ENCODE measurements at regions of chr1 and their contacts with region 1.

Region 1: DNA sequence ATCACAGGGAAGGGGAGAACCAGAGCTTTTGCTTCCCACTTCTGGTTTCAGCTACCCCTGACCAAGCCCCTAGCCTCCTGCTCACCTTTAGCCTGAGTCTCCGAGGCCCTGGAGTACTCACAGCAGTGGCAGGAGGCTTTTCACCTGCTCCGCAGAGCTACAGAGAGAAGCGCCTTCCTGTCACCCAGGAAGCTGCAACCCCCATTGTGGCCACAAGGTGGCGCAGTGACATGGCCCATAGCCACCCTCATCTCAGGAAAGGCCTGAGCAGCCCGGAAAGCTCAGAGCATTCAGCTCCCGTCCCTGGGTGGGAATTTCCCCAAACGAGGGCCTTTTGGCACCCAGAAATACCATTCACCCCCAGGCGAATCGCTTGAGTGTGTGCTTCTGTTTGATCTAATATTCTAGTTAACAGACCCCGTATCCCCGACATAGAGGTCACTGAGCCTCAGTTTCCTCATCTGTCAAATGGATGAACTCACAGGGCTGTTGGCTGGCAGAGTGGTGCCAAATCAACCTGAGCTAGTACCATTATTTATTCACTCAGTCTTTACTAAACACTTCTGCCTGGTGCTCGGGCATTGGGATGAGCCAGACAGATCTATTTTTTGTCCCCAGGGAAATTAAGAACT is 25.3 kb downstream of the A3GALT2 start:
- DNase-seq: peak; percentile 76
- ATAC-seq: peak; percentile 89
- H3K4me3 Mint-ChIP-seq: no peak overlapping the region
- H3K27ac Mint-ChIP-seq: no peak overlapping the region
- H3K4me1 Mint-ChIP-seq: no peaks in the 10 kb centered on the region
- H3K27me3 Mint-ChIP-seq: no peaks in the 10 kb centered on the region
- CTCF ChIP-seq: peak; percentile 69

Region 2: DNA sequence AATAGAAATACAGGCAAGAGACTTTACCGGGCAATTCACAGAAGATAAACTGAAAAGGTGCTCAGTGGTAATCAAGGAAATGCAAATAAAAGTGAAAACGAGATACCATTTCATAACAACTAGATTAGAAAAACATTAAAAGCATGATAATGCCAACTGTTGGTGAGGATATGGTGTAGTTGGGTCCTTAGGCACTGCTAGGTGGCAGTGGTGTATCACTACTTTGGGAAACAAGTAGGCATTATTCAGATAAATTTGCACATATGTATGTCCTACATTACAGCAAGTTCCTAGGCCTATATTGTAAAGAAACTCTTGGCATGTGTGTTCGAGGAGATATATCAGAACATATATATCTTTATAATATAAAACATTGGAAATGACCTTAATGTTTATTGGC is 183.6 kb before region 1 on chr1:
- CTCF ChIA-PET with region 1: interaction called, 4 read pairs
- POLR2A ChIA-PET with region 1: no interaction called
- intact Hi-C with region 1: loop called (anchors 5 kb)
- DNase-seq: no peak
- ATAC-seq: no peak
- H3K4me3 Mint-ChIP-seq: no peak overlapping the region
- H3K27ac Mint-ChIP-seq: no peak overlapping the region
- H3K4me1 Mint-ChIP-seq: no peaks in the 10 kb centered on the region
- H3K27me3 Mint-ChIP-seq: no peaks in the 10 kb centered on the region
- CTCF ChIP-seq: no peak

Region 3: DNA sequence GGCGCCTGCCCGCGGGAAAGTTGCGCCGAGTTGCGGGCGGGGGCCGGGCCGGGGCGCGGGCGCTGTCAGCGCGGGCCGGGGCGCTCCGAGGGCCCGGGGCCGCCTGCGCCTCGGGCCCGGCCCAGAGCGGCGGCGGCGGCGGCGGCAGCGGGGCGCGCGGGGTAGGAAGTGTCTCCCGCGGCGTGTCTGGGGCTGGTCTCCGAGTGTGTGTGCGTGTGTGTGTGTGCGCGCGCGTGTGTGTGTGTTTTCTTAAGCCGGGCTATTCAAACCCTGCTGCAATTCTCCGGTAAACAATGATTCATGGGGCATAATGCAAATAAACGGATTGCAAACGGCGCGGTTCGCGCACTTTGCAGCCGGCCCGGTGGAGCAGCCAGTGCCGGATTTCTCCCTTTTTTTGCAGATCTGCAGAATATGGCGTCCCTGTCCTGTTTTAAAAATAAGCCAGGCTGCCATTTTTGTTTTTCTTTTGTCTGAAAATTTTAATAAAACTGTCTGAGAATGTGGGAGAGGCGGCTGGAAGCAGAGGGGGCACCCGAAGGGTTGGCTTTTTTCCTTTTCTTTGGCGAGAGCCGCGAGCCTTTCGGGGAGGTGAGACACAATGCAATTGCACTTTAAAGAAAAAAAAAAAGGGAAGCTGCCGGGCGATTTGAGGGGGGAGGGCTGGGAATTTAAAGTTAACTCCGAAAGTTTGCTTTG is 38.7 kb before region 1 on chr1:
- CTCF ChIA-PET with region 1: interaction called, 3 read pairs
- POLR2A ChIA-PET with region 1: no interaction called
- intact Hi-C with region 1: loop called (anchors 5 kb)
- DNase-seq: no peak
- ATAC-seq: peak; percentile 60
- H3K4me3 Mint-ChIP-seq: peak overlapping the region; percentile 97
- H3K27ac Mint-ChIP-seq: peak overlapping the region; percentile 95
- H3K4me1 Mint-ChIP-seq: peaks cover 34% of the 10 kb centered on the region
- H3K27me3 Mint-ChIP-seq: no peaks in the 10 kb centered on the region
- CTCF ChIP-seq: no peak

Region 4: DNA sequence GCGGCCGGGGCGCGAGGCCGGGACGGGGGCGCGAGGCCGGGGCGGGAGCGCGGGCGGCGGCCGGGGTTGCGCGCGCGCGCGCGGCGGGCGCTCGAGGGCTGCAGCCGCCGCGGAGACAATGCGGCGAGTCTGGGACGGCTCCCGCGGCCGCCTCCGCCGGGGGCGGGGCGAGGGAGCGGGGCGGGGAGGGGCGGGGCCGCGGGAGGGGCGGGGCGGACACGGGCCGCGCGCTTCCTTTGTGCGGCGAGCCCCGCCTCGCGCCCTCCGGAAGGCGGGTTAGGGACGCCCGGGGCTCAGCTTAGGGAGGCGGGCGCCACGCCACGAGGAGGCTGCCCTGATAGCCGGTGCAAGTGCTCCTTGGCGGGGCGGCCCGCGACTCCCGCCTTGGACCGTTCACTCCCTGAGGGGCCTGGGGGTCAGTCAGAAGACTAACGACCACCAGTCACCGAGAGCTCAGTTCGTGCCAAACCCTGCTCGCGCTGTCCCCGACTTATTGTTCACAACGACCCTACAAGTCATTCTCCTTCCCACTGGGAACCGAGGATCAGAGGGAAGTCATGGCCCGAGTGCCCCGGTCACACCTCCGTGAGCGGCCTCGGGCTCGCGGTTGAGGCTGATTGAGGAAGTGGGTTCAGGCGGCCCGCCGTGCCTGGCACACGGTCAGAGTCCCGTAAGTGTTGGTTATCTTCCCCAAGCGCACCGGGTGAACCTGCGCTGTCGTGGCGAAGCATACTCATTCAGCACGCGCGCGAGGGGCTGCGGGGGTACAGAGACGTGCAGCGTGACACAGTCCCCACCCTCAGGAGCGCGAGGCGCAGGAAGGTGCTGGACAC is 54.4 kb after region 1 on chr1:
- CTCF ChIA-PET with region 1: interaction called, 3 read pairs
- POLR2A ChIA-PET with region 1: no interaction called
- intact Hi-C with region 1: loop called (anchors 5 kb)
- DNase-seq: peak; percentile 77
- ATAC-seq: peak; percentile 88
- H3K4me3 Mint-ChIP-seq: peak overlapping the region; percentile 91
- H3K27ac Mint-ChIP-seq: peak overlapping the region; percentile 93
- H3K4me1 Mint-ChIP-seq: peaks cover 37% of the 10 kb centered on the region
- H3K27me3 Mint-ChIP-seq: no peaks in the 10 kb centered on the region
- CTCF ChIP-seq: no peak

Region 5: DNA sequence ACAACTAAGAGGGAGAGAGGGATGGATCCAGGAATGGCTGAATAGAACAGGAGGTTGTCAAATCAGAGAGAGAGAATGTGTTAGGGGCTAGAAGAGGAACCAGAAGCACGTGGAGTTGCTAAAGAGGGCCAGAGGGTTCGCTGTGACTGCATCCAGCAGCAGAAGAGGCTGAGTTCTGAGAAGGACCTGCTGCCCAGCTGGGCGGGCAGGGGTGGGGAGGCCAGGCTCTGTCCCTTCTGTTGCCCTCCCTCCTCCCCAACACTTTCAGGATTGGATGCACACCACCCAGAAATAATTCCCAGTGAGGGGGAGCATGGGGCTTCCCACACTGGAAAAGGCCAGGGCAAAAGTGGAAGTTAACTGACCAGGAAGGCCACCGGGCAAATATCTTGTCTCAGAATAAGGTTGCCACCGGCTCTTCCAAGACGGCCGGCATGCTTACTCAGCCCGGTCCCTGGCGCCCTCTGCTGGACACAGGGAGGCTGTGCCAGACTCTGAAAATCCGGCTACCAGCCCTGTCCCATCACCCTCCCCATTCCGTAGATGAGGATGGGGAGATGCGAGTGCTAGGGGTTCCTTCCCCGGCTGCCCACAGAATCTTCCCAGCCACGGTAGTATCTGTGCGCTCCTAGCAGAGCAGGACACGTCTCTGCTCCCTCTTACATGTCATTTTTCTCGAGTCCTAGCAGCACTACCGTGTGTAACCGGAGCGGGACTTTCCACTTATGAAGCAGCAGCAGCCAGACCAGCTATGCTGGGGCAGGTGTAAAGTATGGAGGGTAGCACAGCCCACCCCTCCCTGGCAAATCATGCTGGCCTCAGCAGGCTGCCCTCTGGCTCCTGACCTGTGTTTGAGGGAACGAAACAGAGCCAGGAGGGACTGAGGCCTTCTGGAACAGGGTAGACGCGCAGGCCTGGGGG is 72.2 kb after region 1 on chr1:
- CTCF ChIA-PET with region 1: interaction called, 57 read pairs
- POLR2A ChIA-PET with region 1: no interaction called
- intact Hi-C with region 1: loop called (anchors 1 kb)
- DNase-seq: peak; percentile 74
- ATAC-seq: peak; percentile 99
- H3K4me3 Mint-ChIP-seq: no peak overlapping the region
- H3K27ac Mint-ChIP-seq: no peak overlapping the region
- H3K4me1 Mint-ChIP-seq: no peaks in the 10 kb centered on the region
- H3K27me3 Mint-ChIP-seq: peaks cover 8% of the 10 kb centered on the region
- CTCF ChIP-seq: peak; percentile 48